BJ (cell line): ENCODE measurements at regions of chr6 and their contacts with region 1.

Region 1: GRCh38 chr6:159174263-159174969 is 5.2 kb downstream of the FNDC1 start:
- DNase-seq: no peak
- H3K4me3 ChIP-seq: no peak overlapping the region
- H3K27me3 ChIP-seq: peaks cover 13% of the 10 kb centered on the region
- CTCF ChIP-seq: peak; percentile 99

Region 2: DNA sequence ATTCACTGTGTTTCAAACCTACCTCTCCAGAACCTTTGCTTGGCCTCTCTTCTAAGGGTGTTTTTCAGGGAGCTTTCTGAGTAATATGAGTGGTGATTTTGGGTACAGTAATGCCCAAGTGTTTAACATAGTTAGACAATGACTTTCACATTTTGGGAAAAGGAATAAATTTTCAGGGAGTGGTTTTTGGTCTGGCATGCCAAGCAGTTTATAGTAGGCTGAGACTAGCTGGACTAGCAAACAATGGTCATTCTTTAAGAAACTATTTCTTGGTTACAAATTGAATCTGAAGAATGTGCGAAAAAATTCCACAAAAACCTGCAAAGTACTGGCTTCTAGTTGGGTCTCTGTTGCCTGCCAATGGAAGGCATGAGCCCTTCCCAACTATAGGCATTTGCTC is 10.1 kb after region 1 on chr6:
- CTCF ChIA-PET with region 1: interaction called, 33 read pairs
- POLR2A ChIA-PET with region 1: no interaction called
- DNase-seq: peak; percentile 51
- H3K4me3 ChIP-seq: no peak overlapping the region
- H3K27me3 ChIP-seq: no peaks in the 10 kb centered on the region
- CTCF ChIP-seq: no peak

Region 3: DNA sequence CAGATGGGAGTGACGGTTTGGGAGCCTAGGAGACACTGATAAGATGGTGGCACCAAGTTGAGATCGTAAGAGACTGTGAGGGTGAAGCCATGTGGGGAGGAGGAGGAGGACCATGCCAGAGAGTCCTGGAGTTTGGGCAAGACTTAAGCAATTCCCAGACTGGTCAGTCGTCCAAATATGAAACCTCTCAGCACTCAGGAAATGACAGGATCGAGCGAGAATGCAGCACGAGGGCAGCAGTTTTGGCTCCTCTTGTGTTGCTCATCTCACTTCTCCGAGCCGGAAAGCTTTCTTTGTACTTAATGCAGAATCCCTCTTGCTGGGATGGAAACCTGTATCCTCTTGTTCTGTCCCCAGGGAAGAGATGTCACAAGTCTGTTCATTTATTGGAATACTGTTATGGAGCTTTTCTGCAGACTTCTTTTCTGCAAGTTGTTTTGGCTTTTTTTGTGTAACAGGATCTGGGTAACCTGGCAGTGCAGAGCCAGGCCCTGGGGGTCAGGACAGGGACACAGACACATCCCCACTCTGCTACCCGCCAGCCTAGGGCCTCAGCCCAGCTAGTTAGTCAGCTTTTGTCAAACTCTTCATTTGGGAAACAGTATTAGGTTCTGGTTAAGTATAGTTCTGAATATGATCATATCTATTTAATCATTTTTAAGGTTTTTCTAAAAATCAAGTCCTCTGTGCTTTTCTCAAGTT is 29.0 kb after region 1 on chr6:
- CTCF ChIA-PET with region 1: interaction called, 21 read pairs
- POLR2A ChIA-PET with region 1: interaction called, 4 read pairs
- DNase-seq: peak; percentile 72
- H3K4me3 ChIP-seq: no peak overlapping the region
- H3K27me3 ChIP-seq: no peaks in the 10 kb centered on the region
- CTCF ChIP-seq: no peak

Region 4: GRCh38 chr6:159212028-159212427 is 37.6 kb after region 1 on chr6:
- CTCF ChIA-PET with region 1: interaction called, 10 read pairs
- POLR2A ChIA-PET with region 1: no interaction called
- DNase-seq: no peak
- H3K4me3 ChIP-seq: no peak overlapping the region
- H3K27me3 ChIP-seq: no peaks in the 10 kb centered on the region
- CTCF ChIP-seq: no peak

Region 5: DNA sequence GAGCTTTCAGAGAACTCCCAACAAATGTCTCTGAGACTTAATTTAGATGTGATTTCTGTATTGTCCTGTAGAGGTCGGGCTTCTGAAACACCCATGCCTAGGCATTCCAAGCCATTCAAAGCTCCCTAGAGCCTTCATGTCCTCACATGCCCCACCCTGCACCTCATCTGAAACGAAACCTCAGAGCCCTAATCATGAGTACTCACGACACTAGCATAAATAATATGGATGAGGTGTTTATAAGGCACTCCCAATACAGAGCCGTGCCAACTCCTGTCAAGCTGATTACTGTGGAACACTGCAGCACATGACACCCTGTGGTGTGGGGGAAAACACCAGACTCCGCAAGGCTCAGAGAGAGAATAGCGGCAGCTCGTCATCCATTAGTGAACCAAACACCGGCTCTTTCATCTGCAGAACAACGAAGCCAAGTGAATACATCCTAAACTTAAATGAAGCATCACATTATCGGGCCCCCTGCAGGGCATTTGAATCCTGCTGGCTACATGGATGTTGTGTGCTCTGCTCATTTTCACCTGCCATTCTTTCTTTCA is 78.6 kb after region 1 on chr6:
- CTCF ChIA-PET with region 1: interaction called, 20 read pairs
- POLR2A ChIA-PET with region 1: no interaction called
- DNase-seq: no peak
- H3K4me3 ChIP-seq: no peak overlapping the region
- H3K27me3 ChIP-seq: no peaks in the 10 kb centered on the region
- CTCF ChIP-seq: peak; percentile 66

Region 6: GRCh38 chr6:159463119-159463829 is 288.9 kb after region 1 on chr6:
- CTCF ChIA-PET with region 1: interaction called, 27 read pairs
- POLR2A ChIA-PET with region 1: no interaction called
- DNase-seq: no peak
- H3K4me3 ChIP-seq: no peak overlapping the region
- H3K27me3 ChIP-seq: no peaks in the 10 kb centered on the region
- CTCF ChIP-seq: peak; percentile 31; the same call in 1 of the 2 replicates